Prostate gland (tissue), 2 donors: ENCODE measurements at regions of chr22 and their contacts with region 1.

Region 1: DNA sequence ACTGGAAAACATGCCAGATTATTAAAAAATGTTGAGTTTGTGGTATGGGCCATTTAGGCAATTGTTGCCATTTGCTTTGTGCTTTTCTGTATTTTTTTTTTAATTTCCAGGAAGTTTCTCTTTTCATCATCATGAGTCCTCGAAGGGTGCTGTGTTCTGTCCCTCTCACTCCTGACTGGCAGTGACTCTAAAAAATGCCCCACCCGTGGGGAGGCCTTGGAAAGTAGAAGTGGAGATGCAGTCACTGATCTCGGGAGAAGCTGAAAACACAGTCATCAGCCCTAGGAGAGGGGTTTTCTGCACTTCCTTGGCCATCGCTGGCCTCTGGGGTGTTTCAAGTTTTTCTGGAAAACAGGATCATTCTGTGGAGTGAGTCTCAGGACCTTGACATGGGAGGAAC is 98.5 kb upstream of the GRK3 start:
- DNase-seq: no peak
- H3K4me3 ChIP-seq: no peak overlapping the region
- H3K27ac ChIP-seq: no peak overlapping the region
- H3K4me1 ChIP-seq: no peaks in the 10 kb centered on the region
- H3K27me3 ChIP-seq: no peaks in the 10 kb centered on the region
- CTCF ChIP-seq: no peak
- POLR2A ChIP-seq: no peak

Region 2: DNA sequence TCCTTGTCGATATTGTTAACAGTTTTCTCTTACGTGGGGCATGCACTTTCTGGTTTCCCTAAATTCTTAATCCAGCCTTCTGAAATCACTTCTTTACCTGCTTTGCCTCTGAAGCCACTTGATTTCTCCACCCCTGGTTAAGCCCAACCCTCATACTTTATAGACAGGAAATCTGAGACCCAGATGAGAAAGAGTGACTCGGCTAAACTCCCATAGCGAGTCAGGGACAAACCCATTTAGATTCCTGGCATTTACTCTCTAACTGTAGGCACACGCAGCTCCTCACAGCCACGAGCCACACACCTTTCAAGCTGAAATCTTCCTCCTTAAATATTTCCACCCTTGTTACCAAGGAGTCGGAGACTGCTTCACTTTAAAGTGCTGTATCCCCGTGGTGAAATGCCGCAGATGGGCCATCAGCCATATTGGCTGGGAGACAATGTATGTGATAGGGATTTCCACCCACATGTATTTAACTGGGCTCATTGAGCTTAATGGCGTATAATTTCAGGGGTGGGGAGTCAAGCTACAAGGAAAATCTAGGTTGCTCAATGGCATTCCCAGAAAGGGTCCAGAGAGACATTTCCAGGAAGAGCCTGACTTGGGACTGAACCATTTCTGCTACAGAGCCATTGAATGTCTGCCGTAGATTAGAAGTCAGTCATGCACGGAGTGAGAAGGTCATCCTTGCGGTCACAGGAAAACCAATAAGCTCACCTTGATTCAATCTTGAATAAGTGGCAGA is 48.7 kb after region 1 on chr22:
- intact Hi-C with region 1: no loop called
- DNase-seq: no peak
- H3K4me3 ChIP-seq: no peak overlapping the region
- H3K27ac ChIP-seq: no peak overlapping the region
- H3K4me1 ChIP-seq: no peaks in the 10 kb centered on the region
- H3K27me3 ChIP-seq: no peaks in the 10 kb centered on the region
- CTCF ChIP-seq: no peak
- POLR2A ChIP-seq: no peak

Region 3: DNA sequence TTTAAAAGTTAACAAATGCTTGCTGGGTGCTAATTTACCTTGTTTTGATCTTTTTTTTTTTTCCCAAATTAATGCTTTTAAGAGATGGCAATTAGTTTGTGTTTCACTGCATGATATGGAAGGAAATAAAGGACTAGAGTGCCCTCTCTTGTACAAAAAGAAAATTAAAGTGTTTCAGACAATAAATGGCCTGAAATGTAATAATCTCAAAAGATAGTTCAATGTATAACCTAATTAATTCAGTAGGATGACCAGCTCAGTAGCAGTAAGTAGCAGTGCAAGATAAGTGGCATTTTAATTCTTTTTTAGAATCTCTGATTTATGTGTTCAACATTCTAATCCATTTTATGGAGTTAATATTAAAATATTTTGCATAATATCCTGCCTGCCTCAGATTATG is 236.1 kb after region 1 on chr22:
- intact Hi-C with region 1: loop called (anchors 2 kb)
- DNase-seq: no peak
- H3K4me3 ChIP-seq: no peak overlapping the region
- H3K27ac ChIP-seq: no peak overlapping the region
- H3K4me1 ChIP-seq: no peaks in the 10 kb centered on the region
- H3K27me3 ChIP-seq: no peaks in the 10 kb centered on the region
- CTCF ChIP-seq: peak in 3 of 4 experiments; percentile 18 to 64 (median 56)
- POLR2A ChIP-seq: no peak